ENCODE measurements at regions of chr14 and their contacts with region 1.

Region 1: GRCh38 chr14:91649930-91650329 is 82.0 kb downstream of the CATSPERB start:
- DNase-seq: peak; percentile 64
- ATAC-seq: peak; percentile 54; the same call in 1 of the 2 replicates
- H3K4me3 ChIP-seq: no peak overlapping the region
- H3K27ac ChIP-seq: no peak overlapping the region
- H3K4me1 ChIP-seq: no peaks in the 10 kb centered on the region; the same call in 1 of the 2 replicates
- H3K27me3 ChIP-seq: no peaks in the 10 kb centered on the region
- CTCF ChIP-seq: peak; percentile 59

Region 2: GRCh38 chr14:91599994-91600393 is 49.9 kb before region 1 on chr14:
- CTCF ChIA-PET with region 1: interaction called, 11 read pairs
- POLR2A ChIA-PET with region 1: no interaction called
- intact Hi-C with region 1: no loop called
- DNase-seq: no peak
- ATAC-seq: no peak
- H3K4me3 ChIP-seq: no peak overlapping the region
- H3K27ac ChIP-seq: no peak overlapping the region
- H3K4me1 ChIP-seq: peaks cover 2% of the 10 kb centered on the region
- H3K27me3 ChIP-seq: no peaks in the 10 kb centered on the region
- CTCF ChIP-seq: no peak

Region 3: DNA sequence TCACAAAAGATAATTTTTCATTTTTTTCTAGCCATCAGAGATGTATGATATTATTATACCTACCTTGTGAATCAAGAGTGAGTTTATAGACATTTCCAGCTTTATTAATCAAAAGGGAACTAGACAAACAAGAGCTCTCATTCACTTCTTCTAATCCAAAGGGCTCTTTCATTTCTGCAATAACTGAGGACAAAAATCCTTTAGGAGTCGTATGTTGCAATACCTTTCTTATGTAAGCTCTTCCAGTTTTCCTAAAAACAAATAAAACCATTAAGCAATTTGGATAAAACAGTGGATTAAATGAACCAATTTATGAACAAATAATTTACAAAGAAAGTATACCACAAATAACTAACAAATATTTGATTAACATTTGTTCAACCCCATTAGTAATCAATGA is 25.2 kb before region 1 on chr14:
- CTCF ChIA-PET with region 1: no interaction called
- POLR2A ChIA-PET with region 1: no interaction called
- intact Hi-C with region 1: no loop called
- DNase-seq: no peak
- ATAC-seq: no peak
- H3K4me3 ChIP-seq: no peak overlapping the region
- H3K27ac ChIP-seq: no peak overlapping the region
- H3K4me1 ChIP-seq: no peaks in the 10 kb centered on the region
- H3K27me3 ChIP-seq: no peaks in the 10 kb centered on the region
- CTCF ChIP-seq: no peak

Region 4: DNA sequence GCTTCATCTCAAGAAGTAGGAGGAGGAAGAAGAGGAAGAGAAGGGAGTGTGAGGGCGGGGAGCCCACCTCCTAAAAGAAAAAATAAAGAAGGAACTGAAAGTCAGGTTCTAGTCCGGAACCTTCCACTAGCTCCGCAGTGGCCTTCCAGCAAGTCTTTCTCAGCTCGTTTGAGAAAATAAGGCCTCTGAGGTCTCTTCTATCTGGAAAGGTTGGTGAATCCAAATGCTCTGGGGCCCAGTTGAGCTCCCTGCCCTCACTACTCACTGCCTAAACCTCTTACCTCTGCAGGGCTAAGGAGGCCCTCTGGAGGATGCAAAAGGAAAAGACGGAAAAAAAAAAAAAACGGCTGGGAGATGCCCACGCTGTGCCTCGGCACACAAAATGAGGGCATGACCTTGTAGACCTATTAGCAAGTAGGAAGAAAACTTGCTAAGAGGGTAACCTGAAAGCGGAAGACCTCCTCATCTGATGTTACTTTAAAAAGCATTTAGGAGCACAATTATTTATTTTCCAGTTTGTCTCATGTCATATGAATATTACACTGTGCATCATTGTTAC is 261.6 kb after region 1 on chr14:
- CTCF ChIA-PET with region 1: interaction called, 4 read pairs
- POLR2A ChIA-PET with region 1: no interaction called
- intact Hi-C with region 1: loop called (anchors 1 kb)
- DNase-seq: peak; percentile 61
- ATAC-seq: peak; percentile 76
- H3K4me3 ChIP-seq: no peak overlapping the region
- H3K27ac ChIP-seq: no peak overlapping the region
- H3K4me1 ChIP-seq: no peaks in the 10 kb centered on the region
- H3K27me3 ChIP-seq: no peaks in the 10 kb centered on the region
- CTCF ChIP-seq: peak; percentile 73

Region 5: DNA sequence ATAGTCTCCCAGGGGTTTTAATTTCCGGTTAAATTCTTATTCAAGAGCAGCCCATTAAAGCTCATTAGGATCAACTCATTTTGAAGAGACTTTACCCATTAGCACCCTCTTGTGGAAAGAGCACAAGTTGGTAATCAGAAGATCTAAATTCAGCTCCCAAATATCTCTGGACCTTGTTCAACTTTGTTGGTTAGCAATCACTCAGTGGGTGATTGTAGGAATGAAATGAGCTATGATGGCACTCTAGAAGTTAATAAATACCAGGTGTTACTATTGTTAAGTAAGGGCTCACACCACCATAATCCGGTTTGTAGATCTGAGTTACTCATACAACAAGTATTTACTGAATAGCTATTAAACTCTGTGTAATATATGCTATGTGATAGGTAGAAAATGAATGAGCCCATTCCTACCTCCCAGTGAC is 347.0 kb after region 1 on chr14:
- CTCF ChIA-PET with region 1: interaction called, 4 read pairs
- POLR2A ChIA-PET with region 1: no interaction called
- intact Hi-C with region 1: loop called (anchors 5 kb)
- DNase-seq: peak; percentile 57
- ATAC-seq: peak; percentile 86
- H3K4me3 ChIP-seq: no peak overlapping the region
- H3K27ac ChIP-seq: peak overlapping the region; percentile 37
- H3K4me1 ChIP-seq: peaks cover 9% of the 10 kb centered on the region; the same call in 1 of the 2 replicates
- H3K27me3 ChIP-seq: no peaks in the 10 kb centered on the region
- CTCF ChIP-seq: peak; percentile 83